A673 (cell line): ENCODE measurements at regions of chr2 and their contacts with region 1.

Region 1: GRCh38 chr2:218568190-218569037 is at the starts of genes CNOT9 and USP37:
- DNase-seq: peak; percentile 99
- H3K4me3 ChIP-seq: peak within 1 kb of the TSS; percentile 92
- H3K27ac ChIP-seq: peak within 1 kb of the TSS; percentile 94
- H3K4me1 ChIP-seq: peaks cover 19% of the 10 kb centered on the region
- H3K27me3 ChIP-seq: no peaks in the 10 kb centered on the region
- CTCF ChIP-seq: no peak
- total RNA-seq, gene CNOT9: 89.5 and 92.3 TPM in 2 replicates
- total RNA-seq, gene USP37: 31.0 and 33.2 TPM in 2 replicates

Region 2: DNA sequence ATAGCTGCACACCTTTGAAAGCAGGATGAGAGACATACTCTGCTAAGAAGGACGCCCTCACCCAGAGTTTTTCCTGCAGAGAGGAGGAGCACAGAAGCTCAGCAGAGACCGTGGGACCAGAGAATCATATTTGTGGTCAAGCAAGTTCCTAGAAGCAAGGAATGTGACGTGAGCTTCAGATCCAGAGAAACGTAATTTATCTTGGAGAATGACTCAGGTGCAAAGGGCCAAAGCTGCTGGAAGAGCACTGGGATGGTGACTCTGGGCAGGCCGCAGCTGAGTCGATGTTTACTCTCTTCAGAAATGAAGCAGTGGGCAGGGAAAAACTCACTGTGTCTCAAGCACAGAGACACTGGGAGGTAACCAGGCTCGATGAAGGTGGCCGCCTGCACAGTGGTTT is 1985.3 kb before region 1 on chr2:
- CTCF ChIA-PET with region 1: no interaction called
- POLR2A ChIA-PET with region 1: no interaction called
- intact Hi-C with region 1: loop called (anchors 10 kb)
- DNase-seq: no peak
- H3K4me3 ChIP-seq: no peak overlapping the region
- H3K27ac ChIP-seq: no peak overlapping the region
- H3K4me1 ChIP-seq: peaks cover 5% of the 10 kb centered on the region
- H3K27me3 ChIP-seq: no peaks in the 10 kb centered on the region
- CTCF ChIP-seq: no peak

Region 3: GRCh38 chr2:218583983-218584850 is 15.8 kb after region 1 on chr2:
- CTCF ChIA-PET with region 1: no interaction called
- POLR2A ChIA-PET with region 1: interaction called, 12 read pairs
- intact Hi-C with region 1: no loop called
- DNase-seq: no peak
- H3K4me3 ChIP-seq: no peak overlapping the region
- H3K27ac ChIP-seq: no peak overlapping the region
- H3K4me1 ChIP-seq: no peaks in the 10 kb centered on the region
- H3K27me3 ChIP-seq: no peaks in the 10 kb centered on the region
- CTCF ChIP-seq: peak; percentile 19; the same call in 1 of the 2 replicates